ENCODE measurements at regions of chrX and their contacts with region 1.

Region 1: GRCh38 chrX:136616987-136617685 is 30.8 kb upstream of the CD40LG start:
- DNase-seq: peak; percentile 54
- H3K4me3 Mint-ChIP-seq: peak overlapping the region; percentile 46
- H3K27ac Mint-ChIP-seq: peak overlapping the region; percentile 91
- H3K4me1 Mint-ChIP-seq: peaks cover 69% of the 10 kb centered on the region
- H3K27me3 Mint-ChIP-seq: no peaks in the 10 kb centered on the region

Region 2: GRCh38 chrX:136291824-136292223 is 325.3 kb before region 1 on chrX:
- CTCF ChIA-PET with region 1: no interaction called
- intact Hi-C with region 1: no loop called
- DNase-seq: no peak
- H3K4me3 Mint-ChIP-seq: no peak overlapping the region
- H3K27ac Mint-ChIP-seq: no peak overlapping the region
- H3K4me1 Mint-ChIP-seq: no peaks in the 10 kb centered on the region
- H3K27me3 Mint-ChIP-seq: no peaks in the 10 kb centered on the region

Region 3: GRCh38 chrX:136588041-136588788 is 28.9 kb before region 1 on chrX:
- CTCF ChIA-PET with region 1: interaction called, 3 read pairs
- intact Hi-C with region 1: loop called (anchors 1 kb)
- DNase-seq: peak; percentile 37
- H3K4me3 Mint-ChIP-seq: no peak overlapping the region
- H3K27ac Mint-ChIP-seq: peak overlapping the region; percentile 86
- H3K4me1 Mint-ChIP-seq: peaks cover 63% of the 10 kb centered on the region
- H3K27me3 Mint-ChIP-seq: no peaks in the 10 kb centered on the region

Region 4: DNA sequence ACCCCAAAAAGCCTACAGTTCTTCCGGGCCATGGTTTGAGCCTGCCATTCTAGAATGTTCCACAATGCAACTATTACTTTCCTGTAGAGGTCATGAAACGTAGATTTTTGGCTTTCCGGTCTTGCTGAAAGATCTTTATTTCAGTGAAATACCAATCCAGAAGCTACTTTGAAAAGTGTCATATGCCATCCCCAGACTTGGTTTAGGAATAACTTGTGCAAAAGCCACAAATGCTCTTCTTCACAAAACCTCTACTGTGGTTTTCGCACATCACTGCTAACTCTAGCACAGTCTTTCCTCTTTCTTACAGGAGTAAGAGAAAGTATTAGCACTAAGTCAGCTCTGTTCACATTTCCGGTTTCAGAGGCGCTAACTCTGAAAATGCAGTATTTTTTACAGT is 18.1 kb after region 1 on chrX:
- CTCF ChIA-PET with region 1: interaction called, 4 read pairs
- intact Hi-C with region 1: loop called (anchors 1 kb)
- DNase-seq: peak; percentile 44
- H3K4me3 Mint-ChIP-seq: peak overlapping the region; percentile 62
- H3K27ac Mint-ChIP-seq: peak overlapping the region; percentile 93
- H3K4me1 Mint-ChIP-seq: peaks cover 86% of the 10 kb centered on the region
- H3K27me3 Mint-ChIP-seq: no peaks in the 10 kb centered on the region

Measured in activated naive CD4-positive, alpha-beta T cell treated with anti-CD3 and anti-CD28 coated beads for 36 hours (primary cell).